Naive thymus-derived CD4-positive, alpha-beta T cell (primary cell): ENCODE measurements at regions of chr18 and their contacts with region 1.

Region 1: DNA sequence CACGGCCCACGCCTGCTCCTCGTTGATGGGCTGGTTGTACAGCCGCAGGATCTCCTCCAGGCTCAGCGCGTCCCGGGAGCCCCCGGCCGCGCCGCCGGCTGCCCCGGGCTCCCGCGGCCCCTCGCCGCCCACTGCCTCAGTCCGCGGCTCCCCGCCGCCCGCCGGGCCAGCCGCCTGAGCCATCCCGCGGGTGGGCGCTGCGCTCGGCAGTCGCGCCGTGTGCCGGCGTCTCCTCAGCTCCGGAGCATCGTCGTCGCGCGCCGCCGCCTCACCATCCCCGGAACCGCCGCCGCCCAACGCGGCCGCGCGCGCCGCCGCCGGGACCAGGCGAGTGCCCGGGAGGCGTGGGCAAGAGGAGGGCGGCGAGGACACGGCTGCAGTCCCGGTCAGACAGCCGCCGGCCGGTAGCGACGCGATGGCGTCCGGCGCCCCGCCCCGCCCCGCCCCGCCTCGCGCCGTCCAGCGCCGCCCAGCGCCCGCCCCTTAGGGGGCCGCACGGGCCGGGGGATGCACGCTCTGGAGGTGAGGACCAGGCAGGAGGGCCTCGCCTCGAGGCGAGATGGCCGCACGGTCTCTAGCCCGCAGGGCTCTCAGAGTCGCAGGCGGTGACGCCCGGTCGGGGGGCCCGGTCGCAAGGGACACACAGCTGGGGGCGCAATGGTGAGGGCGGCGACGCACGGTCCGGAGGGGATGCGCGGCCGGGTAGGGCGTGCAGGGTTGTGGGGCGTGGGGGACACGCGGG is at the start of gene SPIRE1:
- DNase-seq: peak in 7 of 9 donors; percentile 16 to 65 (median 27)
- ATAC-seq: peak; percentile 76
- H3K4me3 ChIP-seq: peak within 1 kb of the TSS; percentile 55
- H3K4me3 Mint-ChIP-seq: peak within 1 kb of the TSS; percentile 80 to 97 (median 90)
- H3K27ac ChIP-seq: no peak within 1 kb of the TSS
- H3K27ac Mint-ChIP-seq: peak within 1 kb of the TSS in 6 of 9 donors; percentile 23 to 81 (median 64)
- H3K4me1 ChIP-seq: peaks cover 7 to 10% of the 10 kb centered on the region in 2 donors
- H3K4me1 Mint-ChIP-seq: peaks cover 14 to 31% (median 15%) of the 10 kb centered on the region in 7 donors
- H3K27me3 ChIP-seq: no peaks in the 10 kb centered on the region
- H3K27me3 Mint-ChIP-seq: peaks cover 0 to 27% (median 16%) of the 10 kb centered on the region in 5 donors
- total RNA-seq, gene SPIRE1: 0.97 to 2.9 (median 1.6) TPM

Region 2: DNA sequence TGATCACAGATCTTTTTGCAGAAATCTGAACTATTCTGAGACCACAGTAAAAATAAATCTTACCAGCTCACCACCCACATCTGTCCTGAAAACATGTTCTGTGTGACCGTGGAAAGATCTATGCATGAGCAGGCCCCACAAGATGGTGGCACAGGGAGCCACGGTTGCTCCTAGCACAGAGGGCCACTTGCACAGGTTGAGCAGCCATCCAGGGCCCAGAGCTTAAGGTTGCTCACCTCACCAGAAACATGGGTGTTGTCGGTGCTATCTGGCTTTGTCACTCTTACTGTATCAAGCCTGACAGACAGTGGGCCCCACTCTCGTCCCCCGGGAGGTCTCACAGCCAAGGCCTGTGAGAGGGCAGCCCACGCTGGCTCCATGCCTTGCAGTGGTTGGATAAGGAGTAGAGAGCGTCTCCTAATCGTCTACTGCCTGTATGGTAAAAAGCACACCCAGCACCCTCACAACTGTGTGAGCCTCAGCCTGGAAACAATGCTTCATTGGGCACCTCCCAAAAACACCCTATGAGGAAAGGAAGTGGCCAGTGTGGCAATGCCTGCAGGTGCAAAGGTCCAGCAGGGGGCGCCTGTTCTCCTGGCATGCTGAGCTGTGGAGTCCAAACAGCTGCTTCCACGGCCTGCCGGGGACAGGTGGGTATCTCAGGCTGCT is 330.2 kb before region 1 on chr18:
- CTCF ChIA-PET with region 1: interaction called, 3 read pairs
- POLR2A ChIA-PET with region 1: no interaction called
- intact Hi-C with region 1: loop called (anchors 1 kb)
- DNase-seq: peak; percentile 12 to 76 (median 53)
- ATAC-seq: peak; percentile 84
- H3K4me3 ChIP-seq: no peak overlapping the region
- H3K4me3 Mint-ChIP-seq: no peak overlapping the region
- H3K27ac ChIP-seq: no peak overlapping the region
- H3K27ac Mint-ChIP-seq: peak overlapping the region in 1 of 9 donors; percentile 42
- H3K4me1 ChIP-seq: no peaks in the 10 kb centered on the region
- H3K4me1 Mint-ChIP-seq: peaks cover 0 to 7% (median 0%) of the 10 kb centered on the region in 7 donors
- H3K27me3 ChIP-seq: no peaks in the 10 kb centered on the region
- H3K27me3 Mint-ChIP-seq: no peaks in the 10 kb centered on the region

Region 3: DNA sequence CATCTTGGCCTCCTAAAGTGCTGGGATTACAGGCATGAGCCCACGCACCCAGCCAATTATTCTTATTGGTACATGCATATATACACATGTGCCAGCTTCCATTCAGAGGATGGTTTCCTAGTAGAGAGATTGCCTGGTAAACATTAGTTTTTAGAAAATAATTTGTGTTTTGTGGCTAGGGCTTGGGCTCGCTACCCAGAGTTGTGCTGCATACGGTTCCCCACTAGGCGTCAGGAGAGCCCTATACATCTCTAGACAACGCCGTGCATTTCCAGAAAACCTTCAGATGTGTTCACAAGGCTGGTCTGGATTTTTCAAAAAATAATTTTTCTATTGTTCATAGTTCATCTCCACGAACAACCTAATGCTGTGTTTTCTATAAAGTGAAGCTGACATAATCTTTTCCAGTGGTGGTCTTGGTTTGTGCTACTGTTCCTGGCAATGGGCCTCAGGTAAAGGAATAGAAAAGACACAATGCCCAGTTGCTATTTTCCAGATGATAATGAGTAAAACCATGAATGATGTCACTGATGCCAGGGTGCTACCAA is 266.2 kb before region 1 on chr18:
- CTCF ChIA-PET with region 1: interaction called, 13 read pairs
- POLR2A ChIA-PET with region 1: no interaction called
- intact Hi-C with region 1: loop called (anchors 1 kb)
- DNase-seq: peak in 8 of 9 donors; percentile 16 to 59 (median 44)
- ATAC-seq: peak; percentile 96
- H3K4me3 ChIP-seq: no peak overlapping the region
- H3K4me3 Mint-ChIP-seq: no peak overlapping the region
- H3K27ac ChIP-seq: no peak overlapping the region
- H3K27ac Mint-ChIP-seq: no peak overlapping the region
- H3K4me1 ChIP-seq: no peaks in the 10 kb centered on the region
- H3K4me1 Mint-ChIP-seq: peaks cover 0 to 3% (median 0%) of the 10 kb centered on the region in 7 donors
- H3K27me3 ChIP-seq: no peaks in the 10 kb centered on the region
- H3K27me3 Mint-ChIP-seq: peaks cover 0 to 9% (median 5%) of the 10 kb centered on the region in 5 donors

Region 4: DNA sequence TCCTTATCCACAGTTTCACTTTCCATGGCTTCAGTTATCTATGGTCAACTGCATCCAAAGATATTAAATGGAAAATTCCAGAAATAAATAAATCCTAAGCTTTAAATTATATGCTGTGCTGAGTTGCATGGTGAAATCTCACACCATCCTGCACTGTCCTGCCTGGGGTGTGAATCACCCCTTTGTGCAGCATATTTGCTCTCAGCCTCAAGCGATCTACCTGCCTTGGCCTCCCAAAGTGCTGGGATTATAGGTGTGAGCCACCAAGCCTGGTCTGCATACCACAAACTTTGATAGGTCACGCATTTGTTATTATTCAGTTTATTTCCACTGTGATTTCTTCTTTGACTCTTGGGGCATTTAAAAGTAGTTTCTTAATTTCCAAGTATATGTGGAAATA is 117.1 kb before region 1 on chr18:
- CTCF ChIA-PET with region 1: no interaction called
- POLR2A ChIA-PET with region 1: no interaction called
- intact Hi-C with region 1: loop called in 1 of 2 experiments (anchors 2 kb)
- DNase-seq: no peak
- ATAC-seq: no peak
- H3K4me3 ChIP-seq: no peak overlapping the region
- H3K4me3 Mint-ChIP-seq: no peak overlapping the region
- H3K27ac ChIP-seq: no peak overlapping the region
- H3K27ac Mint-ChIP-seq: no peak overlapping the region
- H3K4me1 ChIP-seq: no peaks in the 10 kb centered on the region
- H3K4me1 Mint-ChIP-seq: peaks cover 0 to 13% (median 0%) of the 10 kb centered on the region in 7 donors
- H3K27me3 ChIP-seq: no peaks in the 10 kb centered on the region
- H3K27me3 Mint-ChIP-seq: peaks cover 0 to 13% (median 5%) of the 10 kb centered on the region in 5 donors